Activated B cell treated with CpG ODN at 0.5 μM for 24 hours (primary cell): ENCODE measurements at regions of chr14 and their contacts with region 1.

Region 1: DNA sequence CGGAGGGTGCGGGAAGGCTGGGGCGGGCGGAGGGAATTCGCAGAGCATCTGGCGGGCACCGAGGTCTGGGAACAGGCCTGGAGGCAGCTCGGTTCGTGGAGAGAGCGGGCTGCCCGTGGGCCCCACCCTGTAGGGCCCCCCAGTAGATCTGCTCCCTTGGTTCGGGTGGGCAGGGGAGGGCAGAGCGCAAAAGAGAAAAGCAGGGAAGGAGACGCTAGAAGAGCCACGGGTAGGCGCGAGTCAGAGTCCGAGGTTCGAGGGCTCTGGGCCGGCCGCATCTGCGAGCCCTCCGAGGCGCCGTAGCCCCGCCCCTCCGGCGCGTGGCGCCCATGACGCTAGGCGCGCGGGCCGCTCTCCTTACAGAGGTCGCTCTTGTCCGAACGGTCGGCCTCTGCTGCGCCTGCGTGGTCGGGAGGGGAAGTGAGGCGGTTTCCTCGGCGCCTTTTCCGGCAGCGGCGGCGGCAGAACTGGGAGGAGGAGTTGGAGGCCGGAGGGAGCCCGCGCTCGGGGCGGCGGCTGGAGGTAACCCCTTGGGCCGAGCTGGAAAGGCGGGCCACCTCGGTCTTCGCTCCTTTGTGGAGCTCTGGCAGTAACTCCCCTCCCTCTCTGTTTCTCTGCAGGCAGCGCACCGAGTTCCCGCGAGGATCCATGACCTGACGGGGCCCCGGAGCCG is at the start of gene ARF6:
- DNase-seq: peak; percentile 98
- ATAC-seq: peak; percentile 85
- H3K4me3 Mint-ChIP-seq: peak within 1 kb of the TSS; percentile 96
- H3K27ac Mint-ChIP-seq: peak within 1 kb of the TSS; percentile 98
- H3K4me1 Mint-ChIP-seq: peaks cover 38% of the 10 kb centered on the region
- H3K27me3 Mint-ChIP-seq: no peaks in the 10 kb centered on the region
- CTCF ChIP-seq: no peak
- total RNA-seq, gene ARF6: 136 and 142 TPM in 2 replicates

Region 2: GRCh38 chr14:49930720-49931119 is 37.9 kb after region 1 on chr14:
- CTCF ChIA-PET with region 1: no interaction called
- POLR2A ChIA-PET with region 1: interaction called, 13 read pairs
- intact Hi-C with region 1: loop called (anchors 1 kb)
- DNase-seq: no peak
- ATAC-seq: no peak
- H3K4me3 Mint-ChIP-seq: peak overlapping the region; percentile 40
- H3K27ac Mint-ChIP-seq: peak overlapping the region; percentile 88
- H3K4me1 Mint-ChIP-seq: peaks cover 34% of the 10 kb centered on the region
- H3K27me3 Mint-ChIP-seq: no peaks in the 10 kb centered on the region
- CTCF ChIP-seq: no peak

Region 3: GRCh38 chr14:49959822-49960408 is 67.1 kb after region 1 on chr14:
- CTCF ChIA-PET with region 1: no interaction called
- POLR2A ChIA-PET with region 1: interaction called, 36 read pairs
- intact Hi-C with region 1: loop called (anchors 1 kb)
- DNase-seq: no peak
- ATAC-seq: peak; percentile 59
- H3K4me3 Mint-ChIP-seq: peak overlapping the region; percentile 71
- H3K27ac Mint-ChIP-seq: peak overlapping the region; percentile 96
- H3K4me1 Mint-ChIP-seq: peaks cover 67% of the 10 kb centered on the region
- H3K27me3 Mint-ChIP-seq: no peaks in the 10 kb centered on the region
- CTCF ChIP-seq: no peak

Region 4: DNA sequence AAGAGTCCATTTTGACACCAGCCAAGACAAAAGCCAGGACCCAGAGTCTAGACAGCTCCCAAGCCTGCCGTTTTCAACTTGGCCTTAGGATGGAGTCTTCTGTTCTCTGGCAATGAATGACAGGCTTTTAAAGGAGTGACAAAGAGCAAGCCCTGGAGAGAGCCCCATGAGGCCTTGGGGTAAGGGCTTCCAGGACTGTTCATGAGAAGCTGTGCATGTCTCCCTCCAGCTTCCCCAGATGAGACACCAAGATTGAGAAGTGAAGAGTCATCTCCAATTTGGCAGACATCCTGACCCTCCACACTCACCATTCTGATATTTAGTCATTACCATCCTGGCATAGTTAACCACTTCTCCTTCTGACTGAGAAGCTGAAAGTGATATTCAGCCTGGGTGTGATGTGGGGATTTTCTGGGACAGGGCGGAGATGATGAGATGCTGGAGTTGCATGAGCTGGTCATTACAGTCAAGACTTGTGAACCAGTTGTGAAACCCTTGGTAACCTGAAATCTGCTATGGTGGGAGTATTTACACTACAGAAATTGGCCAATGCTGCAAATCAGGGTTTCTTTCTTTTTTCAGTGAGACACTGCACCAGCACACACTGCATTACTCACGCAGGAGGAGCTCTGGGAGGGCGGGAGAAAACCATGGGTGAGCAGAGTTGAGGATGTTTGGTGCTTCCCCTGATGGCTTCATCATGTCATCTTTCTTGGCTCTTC is 145.8 kb after region 1 on chr14:
- CTCF ChIA-PET with region 1: interaction called, 3 read pairs
- POLR2A ChIA-PET with region 1: interaction called, 35 read pairs
- intact Hi-C with region 1: loop called (anchors 2 kb)
- DNase-seq: no peak
- ATAC-seq: peak; percentile 78
- H3K4me3 Mint-ChIP-seq: peak overlapping the region; percentile 52
- H3K27ac Mint-ChIP-seq: peak overlapping the region; percentile 93
- H3K4me1 Mint-ChIP-seq: peaks cover 45% of the 10 kb centered on the region
- H3K27me3 Mint-ChIP-seq: no peaks in the 10 kb centered on the region
- CTCF ChIP-seq: no peak

Region 5: GRCh38 chr14:50085570-50086320 is 193.0 kb after region 1 on chr14:
- CTCF ChIA-PET with region 1: no interaction called
- POLR2A ChIA-PET with region 1: interaction called, 27 read pairs
- intact Hi-C with region 1: loop called (anchors 1 kb)
- DNase-seq: peak; percentile 44
- ATAC-seq: peak; percentile 75
- H3K4me3 Mint-ChIP-seq: peak overlapping the region; percentile 68
- H3K27ac Mint-ChIP-seq: peak overlapping the region; percentile 97
- H3K4me1 Mint-ChIP-seq: peaks cover 92% of the 10 kb centered on the region
- H3K27me3 Mint-ChIP-seq: no peaks in the 10 kb centered on the region
- CTCF ChIP-seq: no peak

Region 6: GRCh38 chr14:50839048-50839447 is 946.3 kb after region 1 on chr14:
- CTCF ChIA-PET with region 1: no interaction called
- POLR2A ChIA-PET with region 1: no interaction called
- intact Hi-C with region 1: no loop called
- DNase-seq: no peak
- ATAC-seq: peak; percentile 52
- H3K4me3 Mint-ChIP-seq: no peak overlapping the region
- H3K27ac Mint-ChIP-seq: no peak overlapping the region
- H3K4me1 Mint-ChIP-seq: peaks cover 36% of the 10 kb centered on the region
- H3K27me3 Mint-ChIP-seq: no peaks in the 10 kb centered on the region
- CTCF ChIP-seq: no peak